Dendritic cell treated with granulocyte-macrophage colony-stimulating factor and Interleukin-4, amounts not matched to agents 40 ng/mL and 50 ng/mL, for 4 days (primary cell): ENCODE measurements at regions of chr3 and their contacts with region 1.

Region 1: DNA sequence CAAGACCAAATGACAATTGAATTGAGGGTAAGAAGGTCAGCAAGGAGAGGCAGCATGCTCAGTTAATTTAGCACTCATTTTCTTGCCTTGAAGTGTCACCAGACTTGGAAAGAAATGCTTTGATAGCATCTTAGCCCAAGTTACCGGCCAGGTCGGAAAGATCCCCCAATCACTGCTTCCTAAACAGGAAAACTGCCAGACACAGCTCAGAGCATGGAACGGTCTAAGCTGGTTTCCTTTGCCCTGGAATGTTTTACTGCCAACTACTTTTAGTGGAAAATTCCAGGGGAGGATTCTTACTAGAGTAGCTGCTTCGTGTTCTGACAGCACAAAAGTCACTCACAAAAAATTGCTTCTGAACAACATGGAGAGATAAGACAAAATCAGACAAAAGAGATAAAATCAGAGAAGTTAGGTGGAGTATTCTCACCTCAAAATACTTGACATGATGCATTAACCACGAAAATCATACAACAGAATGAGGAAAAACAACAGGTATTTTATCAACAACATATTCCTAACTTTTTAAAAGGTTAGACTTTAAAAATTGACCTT is 65.5 kb downstream of the CCR4 start:
- H3K4me3 Mint-ChIP-seq: no peak overlapping the region
- H3K27ac Mint-ChIP-seq: peak overlapping the region; percentile 21
- H3K4me1 Mint-ChIP-seq: peaks cover 23% of the 10 kb centered on the region
- H3K27me3 Mint-ChIP-seq: no peaks in the 10 kb centered on the region

Region 2: DNA sequence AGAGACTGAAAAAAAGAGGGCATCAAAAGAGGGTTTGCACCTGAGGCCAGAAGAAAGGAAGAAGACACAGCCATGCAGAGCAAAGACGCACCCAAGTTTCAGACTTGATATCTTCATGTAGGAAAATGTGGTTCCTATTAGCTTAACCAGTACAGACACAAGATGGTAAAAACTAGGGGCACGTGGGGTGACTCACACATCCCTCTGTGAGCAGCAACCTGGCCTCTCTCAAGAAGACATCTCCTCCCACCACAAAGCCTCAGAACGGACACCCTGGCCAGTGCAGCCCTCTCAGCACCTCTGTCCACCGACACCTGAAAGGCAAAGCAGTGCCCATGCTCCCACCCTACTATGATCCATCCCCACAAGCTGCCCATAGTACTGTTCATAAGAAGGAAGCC is 46.7 kb after region 1 on chr3:
- intact Hi-C with region 1: loop called (anchors 10 kb)
- H3K4me3 Mint-ChIP-seq: no peak overlapping the region
- H3K27ac Mint-ChIP-seq: peak overlapping the region; percentile 45
- H3K4me1 Mint-ChIP-seq: peaks cover 43% of the 10 kb centered on the region
- H3K27me3 Mint-ChIP-seq: no peaks in the 10 kb centered on the region

Region 3: GRCh38 chr3:33083958-33084357 is 67.0 kb after region 1 on chr3:
- intact Hi-C with region 1: no loop called
- H3K4me3 Mint-ChIP-seq: no peak overlapping the region
- H3K27ac Mint-ChIP-seq: no peak overlapping the region
- H3K4me1 Mint-ChIP-seq: peaks cover 59% of the 10 kb centered on the region
- H3K27me3 Mint-ChIP-seq: no peaks in the 10 kb centered on the region